ENCODE measurements at regions of chr15 and their contacts with region 1.

Region 1: GRCh38 chr15:92714477-92715401 is 59.2 kb upstream of the FAM174B start:
- DNase-seq: peak; percentile 87
- H3K4me3 ChIP-seq: peak overlapping the region; percentile 27 to 62 (median 58)
- H3K27ac ChIP-seq: peak overlapping the region; percentile 74
- H3K4me1 ChIP-seq: peaks cover 12% of the 10 kb centered on the region
- H3K27me3 ChIP-seq: no peaks in the 10 kb centered on the region
- CTCF ChIP-seq: peak; percentile 69 to 85
- POLR2A ChIP-seq: peak; percentile 31

Region 2: DNA sequence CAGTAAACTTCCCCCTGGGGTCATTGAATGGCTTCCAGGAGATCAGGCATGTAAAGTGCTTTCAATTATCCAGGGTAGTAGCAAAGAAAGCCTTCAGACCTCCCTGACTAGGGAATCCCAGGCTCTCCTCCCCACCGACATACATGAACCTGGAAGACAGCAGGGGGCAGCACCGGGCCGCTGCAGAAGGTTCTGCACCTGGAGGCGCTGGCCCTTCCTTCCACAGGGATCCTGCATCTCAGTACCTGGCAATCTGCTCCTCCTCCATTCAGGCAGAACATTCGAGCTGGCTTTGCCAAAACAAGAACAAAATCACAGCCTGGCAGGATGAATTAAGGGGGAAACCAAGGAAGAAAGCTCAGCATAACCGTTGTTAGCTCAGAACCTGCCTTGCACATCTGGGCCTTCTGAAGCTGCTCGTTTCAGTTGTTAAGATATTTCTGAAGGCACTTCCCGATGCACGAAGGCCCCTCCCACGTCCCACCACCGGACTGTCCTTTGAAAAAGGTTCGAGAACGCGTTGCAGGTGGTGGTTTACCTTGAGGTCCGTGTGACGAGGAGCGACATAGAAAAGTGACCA is 623.5 kb before region 1 on chr15:
- CTCF ChIA-PET with region 1: interaction called, 67 read pairs
- POLR2A ChIA-PET with region 1: no interaction called
- dilution Hi-C with region 1: no loop called
- intact Hi-C with region 1: no loop called
- DNase-seq: peak; percentile 25
- H3K4me3 ChIP-seq: no peak overlapping the region
- H3K27ac ChIP-seq: no peak overlapping the region
- H3K4me1 ChIP-seq: no peaks in the 10 kb centered on the region
- H3K27me3 ChIP-seq: no peaks in the 10 kb centered on the region
- CTCF ChIP-seq: peak; percentile 66 to 76
- POLR2A ChIP-seq: no peak

Region 3: GRCh38 chr15:92391640-92392039 is 323.1 kb before region 1 on chr15:
- CTCF ChIA-PET with region 1: interaction called, 13 read pairs
- POLR2A ChIA-PET with region 1: no interaction called
- dilution Hi-C with region 1: no loop called
- intact Hi-C with region 1: loop called (anchors 1 kb)
- DNase-seq: peak; percentile 19
- H3K4me3 ChIP-seq: no peak overlapping the region
- H3K27ac ChIP-seq: no peak overlapping the region
- H3K4me1 ChIP-seq: peaks cover 2% of the 10 kb centered on the region
- H3K27me3 ChIP-seq: peaks cover 30 to 43% of the 10 kb centered on the region in 2 experiments
- CTCF ChIP-seq: peak; percentile 16 to 38
- POLR2A ChIP-seq: no peak

Region 4: DNA sequence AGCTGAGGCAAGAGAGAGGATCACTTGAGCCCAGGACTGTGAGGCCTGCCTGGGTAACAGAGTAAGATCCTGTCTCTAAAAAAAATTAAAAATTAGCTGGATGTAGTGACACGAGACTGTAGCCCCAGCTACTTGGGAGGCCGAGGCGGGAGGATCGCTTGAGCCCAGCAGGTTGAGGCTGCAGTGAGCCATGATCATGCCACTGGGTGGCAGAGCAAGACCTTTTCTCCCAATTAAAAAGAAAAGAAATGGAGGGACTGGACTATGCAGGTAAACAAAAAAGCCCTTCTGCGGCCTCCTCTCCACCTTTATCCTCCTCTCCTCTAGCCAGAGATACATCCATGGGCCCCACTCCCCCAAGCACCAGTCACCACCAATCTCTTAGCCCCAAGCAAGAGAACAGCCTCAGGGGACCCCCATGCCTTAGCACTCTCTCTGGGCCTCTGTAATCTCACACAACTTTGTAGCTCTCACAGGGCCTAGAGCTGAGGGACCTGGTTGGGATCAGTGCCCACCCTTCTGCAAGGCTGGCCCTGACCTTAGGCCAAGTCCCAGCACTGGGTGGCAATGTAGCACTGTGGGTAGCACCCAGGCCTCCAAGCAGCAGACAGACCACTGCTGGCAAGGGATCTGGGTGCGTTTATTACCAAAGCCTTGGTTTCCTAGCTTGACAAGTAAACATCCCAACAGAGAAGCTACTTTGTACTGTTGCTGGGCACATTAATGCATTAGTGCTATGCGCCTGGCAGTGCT is 102.6 kb before region 1 on chr15:
- CTCF ChIA-PET with region 1: interaction called, 39 read pairs
- POLR2A ChIA-PET with region 1: no interaction called
- dilution Hi-C with region 1: no loop called
- intact Hi-C with region 1: loop called (anchors 1 kb)
- DNase-seq: no peak
- H3K4me3 ChIP-seq: no peak overlapping the region
- H3K27ac ChIP-seq: no peak overlapping the region
- H3K4me1 ChIP-seq: peaks cover 10% of the 10 kb centered on the region
- H3K27me3 ChIP-seq: no peaks in the 10 kb centered on the region
- CTCF ChIP-seq: no peak
- POLR2A ChIP-seq: no peak

Region 5: DNA sequence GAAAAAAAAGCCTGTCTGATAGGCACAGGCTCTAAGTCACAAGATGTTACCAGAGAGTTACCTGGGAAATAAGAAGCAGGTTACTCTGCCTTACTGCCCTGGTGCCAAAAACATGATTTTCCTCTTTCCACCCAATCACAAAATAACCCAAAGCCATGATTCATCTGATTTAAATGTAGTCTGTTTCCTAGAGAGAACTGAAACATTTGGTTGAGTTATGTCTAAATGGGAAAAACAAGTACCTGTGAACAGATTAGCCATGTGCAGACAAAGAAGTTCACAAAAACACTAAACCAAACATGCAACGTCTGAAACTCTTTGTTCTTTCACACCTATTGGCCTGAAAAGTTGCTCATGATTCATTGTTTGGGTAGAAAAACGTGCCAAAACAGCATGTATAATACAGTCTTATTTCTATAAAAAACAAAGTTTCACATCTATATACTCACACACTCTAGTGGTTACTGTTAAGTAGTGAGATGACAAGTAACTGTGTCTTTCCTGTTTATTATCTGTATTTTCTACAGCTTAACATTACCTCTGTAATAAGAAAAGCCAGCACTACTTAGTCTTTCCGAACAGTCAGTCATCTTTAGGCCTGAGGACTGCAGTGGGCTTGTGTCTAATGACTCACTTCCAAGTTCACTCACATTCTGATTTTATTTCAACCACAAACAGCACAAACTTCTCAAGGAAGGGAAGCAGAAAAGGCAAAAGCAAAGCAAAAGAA is 89.3 kb before region 1 on chr15:
- CTCF ChIA-PET with region 1: interaction called, 39 read pairs
- POLR2A ChIA-PET with region 1: no interaction called
- dilution Hi-C with region 1: no loop called
- intact Hi-C with region 1: no loop called
- DNase-seq: peak; percentile 93
- H3K4me3 ChIP-seq: no peak overlapping the region
- H3K27ac ChIP-seq: peak overlapping the region; percentile 89
- H3K4me1 ChIP-seq: peaks cover 43% of the 10 kb centered on the region
- H3K27me3 ChIP-seq: no peaks in the 10 kb centered on the region
- CTCF ChIP-seq: no peak
- POLR2A ChIP-seq: peak; percentile 33

Region 6: DNA sequence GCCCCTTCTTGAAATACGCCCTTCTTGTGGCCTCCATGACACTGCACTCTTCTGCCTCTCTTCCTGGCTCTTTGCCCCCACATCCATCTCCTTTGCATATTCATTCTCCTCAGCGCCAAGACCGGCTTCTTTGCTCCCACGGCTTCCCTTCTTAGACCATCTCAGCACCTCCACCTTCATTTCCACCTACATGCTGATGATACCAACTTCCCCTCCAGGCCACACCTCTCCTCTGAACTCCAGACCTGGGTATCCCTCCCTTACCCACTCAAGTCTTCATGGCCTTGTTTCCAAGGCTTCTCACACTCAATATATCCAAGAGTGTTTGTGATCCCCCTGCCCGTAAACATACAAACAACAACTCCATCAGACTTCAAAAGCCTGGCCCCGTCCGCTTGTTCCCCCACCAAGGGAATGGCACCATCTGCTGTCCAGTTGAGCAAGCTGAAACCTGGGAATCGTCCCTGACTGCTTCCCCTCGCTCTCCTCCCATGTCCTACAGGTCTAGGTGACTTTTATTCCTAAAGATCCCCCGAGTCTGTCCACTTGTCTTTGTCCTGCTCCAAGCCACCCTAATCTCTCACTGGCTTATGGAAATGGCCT is 31.4 kb before region 1 on chr15:
- CTCF ChIA-PET with region 1: interaction called, 13 read pairs
- POLR2A ChIA-PET with region 1: no interaction called
- dilution Hi-C with region 1: no loop called
- intact Hi-C with region 1: no loop called
- DNase-seq: peak; percentile 40
- H3K4me3 ChIP-seq: no peak overlapping the region
- H3K27ac ChIP-seq: no peak overlapping the region
- H3K4me1 ChIP-seq: peaks cover 5% of the 10 kb centered on the region
- H3K27me3 ChIP-seq: no peaks in the 10 kb centered on the region
- CTCF ChIP-seq: peak; percentile 27 to 54
- POLR2A ChIP-seq: no peak

Region 7: GRCh38 chr15:92917606-92918407 is 203.1 kb after region 1 on chr15:
- CTCF ChIA-PET with region 1: interaction called, 3 read pairs
- POLR2A ChIA-PET with region 1: no interaction called
- dilution Hi-C with region 1: no loop called
- intact Hi-C with region 1: loop called (anchors 1 kb)
- DNase-seq: peak; percentile 98
- H3K4me3 ChIP-seq: peak overlapping the region in 1 of 3 experiments; percentile 42
- H3K27ac ChIP-seq: peak overlapping the region; percentile 87
- H3K4me1 ChIP-seq: peaks cover 56% of the 10 kb centered on the region
- H3K27me3 ChIP-seq: no peaks in the 10 kb centered on the region
- CTCF ChIP-seq: peak; percentile 69 to 82
- POLR2A ChIP-seq: peak; percentile 54